Ascending aorta (tissue), 2 donors: ENCODE measurements at regions of chr3 and their contacts with region 1.

Region 1: DNA sequence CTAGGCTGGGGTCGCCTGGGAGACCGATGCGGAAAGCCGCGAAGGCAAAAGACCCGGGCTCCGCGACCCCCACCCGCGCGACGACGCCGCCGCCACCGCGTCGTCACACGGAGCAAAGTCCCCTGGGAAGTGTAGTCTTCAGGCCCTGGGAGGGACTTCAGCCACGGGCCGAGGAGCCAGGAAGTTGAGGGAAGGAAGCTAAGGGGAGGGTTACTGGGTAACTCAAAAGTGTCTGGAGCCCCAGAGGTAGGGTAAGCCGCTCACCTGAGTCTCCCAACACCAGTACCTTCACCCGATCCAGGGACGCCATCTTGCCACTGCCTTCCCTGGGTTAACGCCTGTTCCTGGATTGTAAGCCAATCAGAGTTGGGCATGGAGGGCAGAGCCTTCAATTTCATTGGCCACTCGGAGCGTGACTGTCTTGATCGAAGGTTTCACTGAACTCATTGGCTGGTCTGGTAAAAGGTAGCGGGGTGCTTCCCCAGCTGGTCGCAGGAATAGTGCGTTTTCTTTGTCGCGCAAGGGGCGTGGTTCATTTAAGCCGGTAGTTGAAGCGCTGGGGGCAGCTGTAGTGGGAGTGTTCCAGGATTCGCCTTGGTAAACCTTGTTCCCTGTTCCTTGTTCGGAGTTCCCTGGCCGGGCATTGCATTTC is at the starts of genes GTF2E1 and RABL3:
- DNase-seq: peak; percentile 96 to 99
- H3K4me3 ChIP-seq: peak within 1 kb of the TSS; percentile 87 to 97
- H3K27ac ChIP-seq: peak within 1 kb of the TSS; percentile 92 to 93
- H3K4me1 ChIP-seq: peaks cover 4 to 9% of the 10 kb centered on the region in 2 donors
- H3K27me3 ChIP-seq: no peaks in the 10 kb centered on the region
- CTCF ChIP-seq: no peak
- total RNA-seq, gene GTF2E1: 4.4 TPM
- total RNA-seq, gene RABL3: 3.0 TPM

Region 2: GRCh38 chr3:119463171-119464169 is 1278.9 kb before region 1 on chr3 and contains the start of gene TMEM39A:
- intact Hi-C with region 1: loop called (anchors 10 kb)
- DNase-seq: peak; percentile 97 to 100
- H3K4me3 ChIP-seq: peak within 1 kb of the TSS; percentile 84 to 91
- H3K27ac ChIP-seq: peak within 1 kb of the TSS; percentile 87 to 92
- H3K4me1 ChIP-seq: peaks cover 4 to 20% of the 10 kb centered on the region in 2 donors
- H3K27me3 ChIP-seq: no peaks in the 10 kb centered on the region
- CTCF ChIP-seq: no peak
- total RNA-seq, gene TMEM39A: 115 TPM

Region 3: DNA sequence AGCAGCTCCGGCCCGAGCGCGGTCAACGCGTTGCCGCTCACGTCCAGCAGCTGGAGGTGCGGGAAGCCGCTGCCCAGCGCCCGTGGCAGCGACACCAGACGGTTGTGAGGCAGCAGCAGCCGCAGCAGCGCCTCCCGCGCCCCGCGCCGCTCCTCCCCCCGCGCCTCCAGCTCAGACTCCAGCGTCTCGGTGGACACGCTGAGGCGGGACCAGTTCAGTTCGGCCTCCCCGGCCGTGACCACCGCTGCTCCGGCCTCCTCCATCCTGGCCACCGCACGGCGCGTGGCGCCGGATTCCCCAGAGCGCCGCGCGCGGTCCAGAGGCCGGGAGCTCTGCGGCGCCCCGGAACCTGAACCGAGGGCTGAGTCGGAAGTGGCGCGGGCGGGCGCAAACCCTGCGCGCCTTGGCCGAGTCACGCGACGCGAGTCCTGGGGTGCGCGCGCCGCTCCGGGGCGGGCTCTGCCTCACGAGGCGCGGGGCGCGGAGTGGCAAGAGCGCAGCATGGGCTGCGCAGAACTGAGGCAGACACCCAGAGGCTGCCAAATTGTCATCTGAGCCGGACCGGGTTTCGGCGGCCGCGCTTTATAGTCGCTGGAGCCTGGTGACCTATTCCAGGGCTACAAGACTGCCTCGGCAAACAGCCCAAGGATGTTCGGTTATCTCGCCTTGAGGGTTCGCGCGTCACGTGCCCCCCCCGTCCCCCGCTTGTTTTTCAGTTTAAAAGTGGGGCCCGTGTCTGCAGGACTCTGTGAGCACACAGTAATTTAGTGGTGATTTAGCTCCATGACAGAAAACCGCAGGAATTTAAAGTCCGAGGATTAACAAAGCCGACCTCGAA is 393.1 kb before region 1 on chr3 and contains the start of gene LRRC58:
- intact Hi-C with region 1: loop called (anchors 10 kb)
- DNase-seq: peak; percentile 42 to 94
- H3K4me3 ChIP-seq: peak within 1 kb of the TSS; percentile 89 to 96
- H3K27ac ChIP-seq: peak within 1 kb of the TSS; percentile 92 to 94
- H3K4me1 ChIP-seq: peaks cover 0 to 14% of the 10 kb centered on the region in 2 donors
- H3K27me3 ChIP-seq: no peaks in the 10 kb centered on the region
- CTCF ChIP-seq: peak in 1 of 3 experiments; percentile 23
- total RNA-seq, gene LRRC58: 14.7 TPM

Region 4: DNA sequence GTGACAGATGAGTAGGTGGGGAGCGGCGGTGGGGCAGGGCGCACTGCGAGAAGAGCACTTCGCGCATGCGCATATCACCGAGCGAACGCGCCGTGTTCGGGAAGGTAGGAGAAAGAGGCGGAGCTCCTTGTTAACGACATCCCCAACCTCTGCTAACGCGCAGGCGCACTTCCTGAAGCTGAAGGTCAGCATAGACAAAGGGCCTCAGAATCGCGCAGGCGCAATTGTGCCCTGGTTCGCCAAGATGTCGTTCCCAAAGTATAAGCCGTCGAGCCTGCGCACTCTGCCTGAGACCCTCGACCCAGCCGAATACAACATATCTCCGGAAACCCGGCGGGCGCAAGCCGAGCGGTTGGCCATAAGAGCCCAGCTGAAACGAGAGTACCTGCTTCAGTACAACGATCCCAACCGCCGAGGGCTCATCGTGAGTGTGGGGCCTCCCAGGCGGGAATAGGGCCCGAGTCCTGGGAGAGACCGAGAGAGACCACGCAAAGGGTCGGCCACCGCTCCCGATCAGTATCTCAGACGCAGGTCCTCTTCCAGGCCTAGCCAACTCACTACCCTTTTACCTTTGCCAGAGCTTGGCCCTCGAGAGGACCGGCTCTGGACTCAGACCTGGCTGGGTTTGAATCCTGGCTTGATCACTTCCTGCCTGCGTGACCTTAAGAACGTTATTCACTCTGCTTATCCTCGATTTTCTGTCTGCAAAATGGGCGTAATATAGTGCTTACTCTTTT is 146.0 kb before region 1 on chr3 and contains the start of gene NDUFB4:
- intact Hi-C with region 1: loop called (anchors 1 kb)
- DNase-seq: peak; percentile 87 to 98
- H3K4me3 ChIP-seq: peak within 1 kb of the TSS; percentile 68 to 87
- H3K27ac ChIP-seq: peak within 1 kb of the TSS; percentile 73 to 86
- H3K4me1 ChIP-seq: peaks cover 6 to 28% of the 10 kb centered on the region in 2 donors
- H3K27me3 ChIP-seq: no peaks in the 10 kb centered on the region
- CTCF ChIP-seq: no peak
- total RNA-seq, gene NDUFB4: 37.0 TPM

Region 5: GRCh38 chr3:121834696-121835464 is 1092.6 kb after region 1 on chr3 and contains the starts of genes EAF2 and IQCB1:
- intact Hi-C with region 1: loop called (anchors 10 kb)
- DNase-seq: peak; percentile 85 to 98
- H3K4me3 ChIP-seq: peak within 1 kb of the TSS; percentile 82 to 87
- H3K27ac ChIP-seq: peak within 1 kb of the TSS; percentile 67 to 82
- H3K4me1 ChIP-seq: peaks cover 0 to 18% of the 10 kb centered on the region in 2 donors
- H3K27me3 ChIP-seq: no peaks in the 10 kb centered on the region
- CTCF ChIP-seq: no peak
- total RNA-seq, gene EAF2: 2.4 TPM
- total RNA-seq, gene IQCB1: 2.9 TPM